H1 (cell line): ENCODE measurements at regions of chr3 and their contacts with region 1.

Region 1: GRCh38 chr3:51434746-51435327 is 43.8 kb downstream of the RBM15B start:
- DNase-seq: peak in 1 of 2 experiments; percentile 54
- H3K4me3 ChIP-seq: no peak overlapping the region
- H3K27ac ChIP-seq: no peak overlapping the region
- H3K4me1 ChIP-seq: no peaks in the 10 kb centered on the region
- H3K27me3 ChIP-seq: no peaks in the 10 kb centered on the region
- CTCF ChIP-seq: peak; percentile 53 to 84 (median 65)
- EP300 ChIP-seq: no peak
- POLR2A ChIP-seq: no peak
- RAD21 ChIP-seq: peak; percentile 43 to 54

Region 2: DNA sequence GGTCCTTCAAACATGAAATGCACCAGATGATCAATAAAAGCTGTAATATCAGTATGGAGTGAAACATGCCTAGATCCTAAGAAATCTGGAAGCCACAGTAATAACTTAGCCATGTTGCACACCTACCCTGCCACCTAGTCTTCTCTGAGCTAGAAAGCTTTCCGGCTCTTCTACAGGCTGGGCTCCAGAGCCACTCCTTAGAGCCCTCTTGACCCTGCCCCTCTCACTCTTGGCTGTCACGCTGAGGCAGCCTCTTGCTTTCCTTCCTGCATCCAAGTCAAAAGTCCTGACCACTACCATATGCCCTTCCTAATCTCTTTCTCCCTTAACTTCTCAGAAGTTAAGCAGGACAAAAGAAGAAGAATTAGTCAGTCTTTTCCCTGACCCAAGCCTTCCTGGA is 26.0 kb before region 1 on chr3:
- CTCF ChIA-PET with region 1: interaction called, 12 read pairs
- POLR2A ChIA-PET with region 1: no interaction called
- DNase-seq: no peak
- H3K4me3 ChIP-seq: no peak overlapping the region
- H3K27ac ChIP-seq: no peak overlapping the region
- H3K4me1 ChIP-seq: no peaks in the 10 kb centered on the region
- H3K27me3 ChIP-seq: no peaks in the 10 kb centered on the region
- CTCF ChIP-seq: no peak
- EP300 ChIP-seq: no peak
- POLR2A ChIP-seq: no peak
- RAD21 ChIP-seq: no peak

Region 3: DNA sequence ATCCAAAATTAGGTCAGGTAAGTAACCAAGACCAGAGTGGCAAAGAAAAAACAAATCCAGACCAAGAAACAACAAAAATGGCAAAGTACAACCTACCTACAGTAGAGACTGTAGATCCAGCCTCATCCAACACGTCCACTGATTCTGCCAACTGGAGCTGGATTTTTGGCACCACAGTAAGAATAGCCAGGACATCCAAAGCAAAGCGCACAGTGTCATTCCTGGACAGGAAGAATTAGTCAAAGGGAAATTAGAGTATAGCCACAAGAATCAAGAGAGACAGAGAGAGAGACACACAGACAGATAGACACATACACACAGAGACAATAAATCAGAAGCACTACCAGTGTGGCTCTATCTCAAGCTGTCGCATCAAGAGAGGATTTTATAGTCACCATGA is 12.6 kb before region 1 on chr3:
- CTCF ChIA-PET with region 1: interaction called, 32 read pairs
- POLR2A ChIA-PET with region 1: interaction called, 3 read pairs
- DNase-seq: no peak
- H3K4me3 ChIP-seq: no peak overlapping the region
- H3K27ac ChIP-seq: no peak overlapping the region
- H3K4me1 ChIP-seq: peaks cover 0 to 2% (median 0%) of the 10 kb centered on the region in 4 experiments; a peak in 2 of 7 replicates
- H3K27me3 ChIP-seq: no peaks in the 10 kb centered on the region
- CTCF ChIP-seq: no peak
- EP300 ChIP-seq: no peak
- POLR2A ChIP-seq: no peak
- RAD21 ChIP-seq: no peak

Region 4: GRCh38 chr3:51445544-51446280 is 10.9 kb after region 1 on chr3:
- CTCF ChIA-PET with region 1: interaction called, 18 read pairs
- POLR2A ChIA-PET with region 1: no interaction called
- DNase-seq: no peak
- H3K4me3 ChIP-seq: no peak overlapping the region
- H3K27ac ChIP-seq: no peak overlapping the region
- H3K4me1 ChIP-seq: no peaks in the 10 kb centered on the region
- H3K27me3 ChIP-seq: no peaks in the 10 kb centered on the region
- CTCF ChIP-seq: no peak
- EP300 ChIP-seq: no peak
- POLR2A ChIP-seq: no peak
- RAD21 ChIP-seq: no peak

Region 5: DNA sequence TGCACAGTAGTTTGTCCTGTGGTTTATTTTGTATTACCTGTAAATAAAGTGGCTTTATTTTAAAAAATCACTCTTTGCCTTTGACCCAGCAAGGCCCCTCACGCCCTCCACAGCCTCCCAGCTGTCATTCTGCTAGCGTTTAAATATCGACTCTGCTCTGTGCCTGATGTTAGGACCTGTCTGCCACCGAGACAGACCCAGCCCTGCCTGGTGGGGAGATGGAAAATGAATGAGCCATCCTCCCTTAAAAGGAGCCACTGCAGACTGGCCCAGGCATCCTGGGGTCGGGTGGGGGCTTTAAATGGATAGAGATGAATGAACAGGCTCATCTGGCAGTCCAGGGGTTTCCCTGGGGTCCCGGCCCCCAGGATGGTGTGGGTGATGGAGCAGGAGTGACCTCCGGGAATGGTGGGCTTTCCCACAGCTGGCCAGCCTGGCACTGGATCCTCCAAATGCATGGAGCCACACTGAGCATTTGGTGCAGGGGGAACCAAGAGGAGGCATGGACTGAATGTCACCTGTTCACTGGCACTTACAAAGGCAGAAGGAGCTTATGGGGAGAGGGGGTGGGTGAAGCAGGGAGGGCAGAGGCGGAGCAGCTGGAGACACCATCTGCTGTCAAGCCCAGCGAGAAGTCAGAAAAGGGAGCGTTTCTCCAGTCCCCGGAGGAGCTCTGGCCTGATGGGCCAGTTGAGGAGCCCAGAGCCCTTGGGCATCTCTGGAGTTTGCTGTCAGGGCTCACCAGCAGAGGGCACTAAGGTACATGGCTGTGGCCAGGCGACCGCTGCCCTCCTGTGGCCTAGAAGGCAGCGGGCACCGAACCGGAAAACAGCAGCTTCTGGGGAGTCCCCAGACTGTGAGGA is 283.9 kb after region 1 on chr3:
- CTCF ChIA-PET with region 1: no interaction called
- POLR2A ChIA-PET with region 1: no interaction called
- DNase-seq: peak; percentile 69 to 92
- H3K4me3 ChIP-seq: no peak overlapping the region
- H3K27ac ChIP-seq: no peak overlapping the region
- H3K4me1 ChIP-seq: no peaks in the 10 kb centered on the region; a peak in 1 of 7 replicates
- H3K27me3 ChIP-seq: no peaks in the 10 kb centered on the region
- CTCF ChIP-seq: peak in 2 of 3 experiments; percentile 99 to 100; a peak in 3 of 4 replicates
- EP300 ChIP-seq: no peak
- POLR2A ChIP-seq: no peak
- RAD21 ChIP-seq: peak; percentile 89 to 95